Activated T-helper 1 cell treated with anti-CD3 and anti-CD28 coated beads, Interleukin-12 subunit alpha, Interleukin-12 subunit beta, Interleukin-2, Interleukin-4 antibody, amounts not matched to agents 30 ng/mL and 10 ng/mL and 1 ng/mL, durations not matched to agents 14 hours and 24 hours and 36 hours (primary cell): ENCODE measurements at regions of chrX and their contacts with region 1.

Region 1: DNA sequence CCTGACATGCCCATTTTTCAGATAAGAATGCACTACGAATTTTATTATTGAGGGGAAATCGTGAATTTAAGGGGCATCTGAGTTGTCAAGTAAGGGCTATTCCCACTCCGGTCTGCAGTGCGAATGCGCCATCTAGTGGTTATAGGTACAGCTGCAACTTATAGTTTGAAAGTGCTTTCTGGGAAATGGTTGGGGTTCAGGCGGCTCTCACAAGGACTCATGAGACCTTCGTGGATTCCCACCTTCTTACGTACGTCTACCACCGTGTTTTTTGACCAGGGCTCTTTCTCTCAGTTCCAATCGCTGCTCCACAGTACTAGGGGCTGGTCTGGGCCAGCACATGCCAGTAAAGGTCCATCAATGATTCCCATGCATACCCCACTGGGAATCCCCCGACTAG is 12.3 kb downstream of the MSL3 start:
- DNase-seq: no peak
- H3K4me3 Mint-ChIP-seq: no peak overlapping the region
- H3K27ac Mint-ChIP-seq: peak overlapping the region; percentile 79
- H3K4me1 Mint-ChIP-seq: peaks cover 37% of the 10 kb centered on the region
- H3K27me3 Mint-ChIP-seq: no peaks in the 10 kb centered on the region

Region 2: DNA sequence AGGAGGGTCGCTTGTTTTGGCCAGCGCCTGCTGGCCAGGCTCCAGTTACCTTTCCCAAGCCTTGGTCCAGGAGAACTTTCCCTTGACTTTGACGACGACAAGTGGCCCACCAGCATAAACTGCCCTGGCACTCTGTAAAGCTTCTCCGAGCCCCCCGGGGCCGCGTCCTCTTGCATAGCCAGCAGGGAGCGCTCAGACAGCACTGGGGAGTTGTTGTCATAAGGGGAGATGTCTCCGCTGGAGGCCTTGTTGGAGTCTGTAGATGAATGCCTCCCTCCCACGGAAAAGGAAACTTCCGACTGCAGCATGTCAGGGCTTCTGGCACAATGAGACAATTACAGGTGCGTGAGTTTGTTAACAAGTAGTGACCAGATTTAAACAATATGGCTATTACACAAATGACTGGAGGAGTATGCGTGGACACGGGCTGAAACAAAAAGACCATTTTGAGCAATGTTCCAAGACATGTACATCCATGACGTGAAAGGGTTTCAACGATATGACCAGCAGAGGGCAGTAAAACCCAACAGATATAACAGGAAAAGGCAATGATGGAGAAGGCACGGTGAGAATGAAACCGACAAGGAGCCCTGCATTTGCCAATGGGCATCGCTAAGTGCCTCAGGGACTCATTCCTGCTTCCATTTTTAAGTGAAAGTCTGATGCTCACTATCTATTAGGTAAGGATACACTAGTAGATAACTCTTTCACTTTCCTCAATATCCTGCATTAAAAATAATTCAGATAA is 626.2 kb before region 1 on chrX:
- intact Hi-C with region 1: loop called (anchors 2 kb)
- DNase-seq: peak; percentile 28
- H3K4me3 Mint-ChIP-seq: no peak overlapping the region
- H3K27ac Mint-ChIP-seq: no peak overlapping the region
- H3K4me1 Mint-ChIP-seq: no peaks in the 10 kb centered on the region
- H3K27me3 Mint-ChIP-seq: peaks cover 4% of the 10 kb centered on the region

Region 3: DNA sequence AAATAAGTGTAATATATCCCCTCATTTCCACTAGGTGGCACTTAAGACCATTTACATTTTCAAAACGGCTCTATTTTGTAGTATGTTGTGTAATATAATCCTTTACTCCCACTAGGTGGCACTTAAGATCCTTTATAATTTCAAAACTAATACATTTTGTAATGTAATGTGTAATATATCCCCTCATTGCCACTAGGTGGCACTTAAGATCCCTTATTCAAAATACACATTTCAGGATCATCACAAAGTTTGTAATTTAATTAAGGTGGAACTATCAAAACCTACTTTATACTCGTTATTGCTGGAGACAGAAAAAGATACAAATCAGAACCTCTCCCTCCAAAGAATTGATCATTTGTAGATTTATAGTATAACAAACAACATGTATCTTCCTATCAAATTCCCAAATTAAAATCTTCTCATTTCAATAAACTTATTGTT is 237.1 kb before region 1 on chrX:
- intact Hi-C with region 1: loop called (anchors 1 kb)
- DNase-seq: no peak
- H3K4me3 Mint-ChIP-seq: no peak overlapping the region
- H3K27ac Mint-ChIP-seq: no peak overlapping the region
- H3K4me1 Mint-ChIP-seq: no peaks in the 10 kb centered on the region
- H3K27me3 Mint-ChIP-seq: peaks cover 8% of the 10 kb centered on the region

Region 4: GRCh38 chrX:11724122-11725017 is 46.0 kb before region 1 on chrX:
- intact Hi-C with region 1: loop called (anchors 1 kb)
- DNase-seq: no peak
- H3K4me3 Mint-ChIP-seq: no peak overlapping the region
- H3K27ac Mint-ChIP-seq: no peak overlapping the region
- H3K4me1 Mint-ChIP-seq: no peaks in the 10 kb centered on the region
- H3K27me3 Mint-ChIP-seq: peaks cover 2% of the 10 kb centered on the region

Region 5: DNA sequence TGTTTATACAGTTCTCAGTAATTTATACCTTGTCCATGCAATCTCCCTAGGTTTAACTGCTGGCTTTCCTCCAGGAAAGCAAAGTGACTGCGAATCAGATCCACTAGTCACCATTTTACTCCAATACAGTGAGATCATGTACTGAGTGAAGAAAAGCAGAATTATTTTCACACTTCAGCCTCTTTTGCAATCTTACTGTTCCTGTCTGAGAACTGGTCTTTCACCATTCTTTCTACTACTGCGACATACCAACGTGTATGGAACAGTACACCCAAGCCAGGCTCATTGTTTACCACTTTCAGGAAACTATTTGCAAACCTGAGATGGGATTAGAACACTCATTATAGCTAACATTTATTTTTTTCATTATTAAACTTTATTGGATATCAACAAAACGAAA is 20.3 kb before region 1 on chrX:
- intact Hi-C with region 1: no loop called
- DNase-seq: no peak
- H3K4me3 Mint-ChIP-seq: no peak overlapping the region
- H3K27ac Mint-ChIP-seq: no peak overlapping the region
- H3K4me1 Mint-ChIP-seq: no peaks in the 10 kb centered on the region
- H3K27me3 Mint-ChIP-seq: peaks cover 11% of the 10 kb centered on the region

Region 6: DNA sequence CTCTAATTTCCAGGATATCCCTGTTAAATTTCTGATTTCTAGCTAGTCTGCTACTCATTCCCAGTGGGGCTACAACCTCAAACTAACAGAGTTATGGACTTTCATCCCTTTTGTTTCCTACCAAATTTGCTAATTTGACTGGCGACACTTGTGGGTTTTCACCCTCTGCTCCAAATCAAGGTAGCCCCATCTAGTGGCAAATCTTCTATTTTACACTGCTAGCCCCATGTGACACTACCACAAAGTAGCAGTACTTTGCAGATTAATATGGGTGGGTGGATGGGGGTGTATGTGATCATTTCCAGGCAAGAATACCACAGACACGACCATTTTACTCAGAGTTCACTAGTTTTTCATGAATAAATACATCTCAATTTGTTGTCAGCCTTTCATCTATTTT is 138.1 kb after region 1 on chrX:
- intact Hi-C with region 1: loop called (anchors 5 kb)
- DNase-seq: no peak
- H3K4me3 Mint-ChIP-seq: no peak overlapping the region
- H3K27ac Mint-ChIP-seq: no peak overlapping the region
- H3K4me1 Mint-ChIP-seq: peaks cover 4% of the 10 kb centered on the region
- H3K27me3 Mint-ChIP-seq: no peaks in the 10 kb centered on the region